ENCODE measurements at regions of chr6 and their contacts with region 1.

Region 1: GRCh38 chr6:123316733-123317323 is 319.9 kb downstream of the TRDN start:
- DNase-seq: no peak
- ATAC-seq: no peak
- H3K4me3 ChIP-seq: no peak overlapping the region
- H3K27ac ChIP-seq: no peak overlapping the region
- H3K4me1 ChIP-seq: no peaks in the 10 kb centered on the region
- H3K27me3 ChIP-seq: peaks cover 12% of the 10 kb centered on the region
- CTCF ChIP-seq: peak; percentile 28 to 47 (median 43); a peak in 4 of 6 replicates
- POLR2A ChIP-seq: no peak
- RAD21 ChIP-seq: peak; percentile 55

Region 2: GRCh38 chr6:122476131-122476530 is 840.7 kb before region 1 on chr6:
- CTCF ChIA-PET with region 1: no interaction called
- POLR2A ChIA-PET with region 1: no interaction called
- RAD21 ChIA-PET with region 1: no interaction called
- intact Hi-C with region 1: loop called (anchors 5 kb)
- DNase-seq: no peak
- ATAC-seq: no peak
- H3K4me3 ChIP-seq: no peak overlapping the region
- H3K27ac ChIP-seq: no peak overlapping the region
- H3K4me1 ChIP-seq: peaks cover 0 to 4% of the 10 kb centered on the region in 2 experiments; a peak in 1 of 4 replicates
- H3K27me3 ChIP-seq: no peaks in the 10 kb centered on the region
- CTCF ChIP-seq: peak; percentile 33 to 77 (median 61); a peak in 5 of 6 replicates
- POLR2A ChIP-seq: no peak
- RAD21 ChIP-seq: peak; percentile 73

Region 3: GRCh38 chr6:122869437-122870024 is 447.3 kb before region 1 on chr6:
- CTCF ChIA-PET with region 1: interaction called, 20 read pairs
- POLR2A ChIA-PET with region 1: no interaction called
- RAD21 ChIA-PET with region 1: interaction called in 1 of 2 experiments, 4 read pairs
- intact Hi-C with region 1: loop called (anchors 1 kb)
- DNase-seq: peak; percentile 43
- ATAC-seq: peak; percentile 94
- H3K4me3 ChIP-seq: no peak overlapping the region
- H3K27ac ChIP-seq: no peak overlapping the region
- H3K4me1 ChIP-seq: 0 out of 4 replicates have a peak, but pooled peaks cover 0 to 4% of the 10 kb centered on the region in 2 experiments
- H3K27me3 ChIP-seq: peaks cover 25% of the 10 kb centered on the region
- CTCF ChIP-seq: peak; percentile 53 to 72 (median 69); a peak in 5 of 6 replicates
- POLR2A ChIP-seq: no peak
- RAD21 ChIP-seq: peak; percentile 82

Region 4: DNA sequence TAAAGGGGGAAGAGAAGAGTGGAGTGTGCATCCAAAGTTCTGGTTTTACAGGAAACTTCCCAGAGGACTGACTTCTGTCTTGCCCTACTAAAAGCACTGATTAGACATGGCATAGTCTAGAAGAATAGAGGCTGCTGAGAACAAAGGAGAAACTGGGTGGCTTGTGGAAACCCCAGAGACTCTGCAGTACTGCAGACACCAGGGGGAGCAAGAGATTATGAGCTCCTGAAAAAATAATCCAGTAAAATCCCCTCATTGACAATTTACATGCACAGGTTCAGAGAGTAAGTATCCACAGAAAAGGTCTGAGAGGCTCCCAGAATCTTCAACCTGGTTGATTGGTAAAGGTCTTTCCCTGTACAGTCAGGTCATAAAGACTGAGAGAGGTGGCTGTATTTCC is 369.5 kb before region 1 on chr6:
- CTCF ChIA-PET with region 1: interaction called, 5 read pairs
- POLR2A ChIA-PET with region 1: no interaction called
- RAD21 ChIA-PET with region 1: no interaction called
- intact Hi-C with region 1: loop called (anchors 1 kb)
- DNase-seq: peak; percentile 18
- ATAC-seq: peak; percentile 77
- H3K4me3 ChIP-seq: no peak overlapping the region
- H3K27ac ChIP-seq: no peak overlapping the region
- H3K4me1 ChIP-seq: no peaks in the 10 kb centered on the region
- H3K27me3 ChIP-seq: peaks cover 16% of the 10 kb centered on the region; the same call in 1 of the 2 replicates
- CTCF ChIP-seq: peak; percentile 23 to 70 (median 62); a peak in 5 of 6 replicates
- POLR2A ChIP-seq: no peak
- RAD21 ChIP-seq: peak; percentile 48

Region 5: DNA sequence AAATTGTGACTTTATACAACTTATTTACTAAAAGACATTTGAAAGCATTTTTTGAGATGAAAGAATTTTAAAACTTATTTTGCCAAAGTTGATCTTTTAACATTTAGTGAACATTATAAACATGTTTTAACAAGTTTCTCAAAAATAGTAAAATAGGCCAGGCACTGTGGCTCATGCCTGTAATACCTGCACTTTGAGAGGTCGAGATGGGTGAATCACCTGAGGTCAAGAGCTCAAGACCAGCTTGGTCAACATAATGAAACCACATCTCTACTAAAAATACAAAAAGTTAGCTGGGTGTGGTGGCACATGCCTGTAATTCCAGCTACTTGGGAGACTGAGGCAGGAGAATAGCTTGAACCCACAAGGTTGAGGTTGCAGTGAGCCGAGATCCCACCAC is 242.2 kb before region 1 on chr6:
- CTCF ChIA-PET with region 1: no interaction called
- POLR2A ChIA-PET with region 1: no interaction called
- RAD21 ChIA-PET with region 1: no interaction called
- intact Hi-C with region 1: no loop called
- DNase-seq: no peak
- ATAC-seq: no peak
- H3K4me3 ChIP-seq: no peak overlapping the region
- H3K27ac ChIP-seq: no peak overlapping the region
- H3K4me1 ChIP-seq: no peaks in the 10 kb centered on the region
- H3K27me3 ChIP-seq: peaks cover 16% of the 10 kb centered on the region; the same call in 1 of the 2 replicates
- CTCF ChIP-seq: no peak
- POLR2A ChIP-seq: no peak
- RAD21 ChIP-seq: no peak

Region 6: DNA sequence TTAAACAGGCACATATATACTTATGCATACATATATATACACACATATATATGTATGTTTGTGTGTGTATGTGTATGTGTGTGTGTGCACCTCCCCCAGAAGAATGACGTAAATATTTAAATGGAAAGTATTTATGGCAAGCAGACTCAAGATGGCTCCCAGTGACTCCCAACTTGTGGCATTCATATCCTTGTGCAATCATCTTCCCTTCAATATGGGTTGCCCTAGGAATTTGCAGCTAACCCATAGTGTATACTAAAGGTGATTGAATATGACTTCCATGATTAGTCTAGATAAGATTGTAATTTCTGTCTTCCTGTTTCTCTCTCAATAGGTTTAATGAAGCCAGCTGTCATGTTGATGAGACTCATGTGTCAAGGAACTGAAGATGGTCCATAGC is 192.3 kb after region 1 on chr6:
- CTCF ChIA-PET with region 1: no interaction called
- POLR2A ChIA-PET with region 1: no interaction called
- RAD21 ChIA-PET with region 1: no interaction called
- intact Hi-C with region 1: no loop called
- DNase-seq: no peak
- ATAC-seq: no peak
- H3K4me3 ChIP-seq: no peak overlapping the region
- H3K27ac ChIP-seq: no peak overlapping the region
- H3K4me1 ChIP-seq: no peaks in the 10 kb centered on the region
- H3K27me3 ChIP-seq: 0 out of 2 replicates have a peak, but pooled peaks cover under 1% of the 10 kb centered on the region
- CTCF ChIP-seq: no peak
- POLR2A ChIP-seq: no peak
- RAD21 ChIP-seq: no peak

Measured in HCT116 (cell line).